Endothelial cell of umbilical vein (primary cell): ENCODE measurements at regions of chr15 and their contacts with region 1.

Region 1: DNA sequence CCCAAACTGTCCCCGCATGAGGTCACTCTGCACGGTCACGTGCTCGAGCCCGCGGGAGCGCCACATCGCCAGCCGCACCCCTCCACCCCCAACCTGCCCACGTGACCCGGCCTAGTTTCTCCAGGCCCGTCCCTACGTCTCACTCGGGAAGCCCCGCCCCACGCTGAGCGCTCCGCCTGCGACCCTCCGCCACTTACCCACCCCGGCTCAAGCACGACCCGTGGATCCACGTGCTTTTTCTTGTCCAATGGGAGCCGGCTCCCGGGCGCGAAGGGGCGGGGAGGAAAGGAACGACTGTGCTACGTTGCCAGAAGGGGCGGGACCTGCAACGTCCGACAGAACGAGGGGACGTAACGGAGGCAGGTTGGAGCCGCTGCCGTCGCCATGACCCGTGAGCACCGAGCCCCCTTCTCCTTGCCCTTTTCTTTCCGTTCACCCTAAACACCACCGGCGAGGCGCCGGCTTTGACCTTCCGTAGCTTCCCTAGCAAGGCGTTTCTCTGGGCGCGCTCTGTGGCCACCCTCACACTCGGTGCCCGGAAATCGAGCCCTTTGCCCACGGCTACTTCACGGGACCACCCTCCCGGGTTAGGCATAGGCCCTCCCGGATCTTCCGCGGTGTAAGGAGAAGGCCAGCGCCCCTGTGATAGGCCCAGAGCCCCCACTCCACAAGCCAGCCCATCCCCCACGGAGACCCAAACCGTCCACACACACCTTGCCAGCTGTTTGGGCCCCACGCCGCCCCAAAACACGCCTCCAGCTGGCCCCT is at the start of gene SERF2:
- DNase-seq: peak; percentile 100
- H3K4me3 ChIP-seq: peak within 1 kb of the TSS; percentile 73 to 82 (median 74)
- H3K27ac ChIP-seq: peak within 1 kb of the TSS; percentile 91
- H3K4me1 ChIP-seq: peaks cover 21% of the 10 kb centered on the region
- H3K27me3 ChIP-seq: no peaks in the 10 kb centered on the region
- CTCF ChIP-seq: no peak
- POLR2A ChIP-seq: peak; percentile 95
- total RNA-seq, gene SERF2: 897 and 970 TPM in 2 replicates

Region 2: DNA sequence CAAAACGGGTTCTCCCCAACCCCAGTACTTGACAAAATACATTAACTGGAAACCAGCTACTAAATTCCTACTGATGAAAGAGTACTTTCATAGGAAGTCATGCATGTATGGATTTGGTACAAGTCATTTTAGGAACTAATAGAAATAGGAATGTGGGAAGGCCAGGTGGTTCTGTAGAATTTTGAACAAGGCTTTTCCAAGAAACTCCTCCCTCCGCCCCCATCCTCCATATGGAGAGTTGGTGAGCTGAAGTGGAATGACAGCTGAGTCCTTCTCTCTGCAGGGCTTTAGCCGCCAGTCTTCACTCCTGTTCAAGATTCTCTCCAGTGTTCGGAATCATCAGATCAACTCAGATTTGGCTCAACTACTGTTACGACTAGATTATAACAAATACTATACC is 388.0 kb before region 1 on chr15:
- CTCF ChIA-PET with region 1: no interaction called
- POLR2A ChIA-PET with region 1: no interaction called
- dilution Hi-C with region 1: no loop called
- intact Hi-C with region 1: no loop called
- DNase-seq: no peak
- H3K4me3 ChIP-seq: no peak overlapping the region
- H3K27ac ChIP-seq: no peak overlapping the region
- H3K4me1 ChIP-seq: no peaks in the 10 kb centered on the region
- H3K27me3 ChIP-seq: no peaks in the 10 kb centered on the region
- CTCF ChIP-seq: no peak
- POLR2A ChIP-seq: no peak

Region 3: GRCh38 chr15:43776718-43777583 is 15.2 kb before region 1 on chr15 and contains the start of gene ELL3:
- CTCF ChIA-PET with region 1: interaction called, 24 read pairs
- POLR2A ChIA-PET with region 1: no interaction called
- dilution Hi-C with region 1: no loop called
- intact Hi-C with region 1: loop called (anchors 1 kb)
- DNase-seq: peak; percentile 87
- H3K4me3 ChIP-seq: peak within 1 kb of the TSS; percentile 56 to 76 (median 61)
- H3K27ac ChIP-seq: peak within 1 kb of the TSS; percentile 48
- H3K4me1 ChIP-seq: peaks cover 3% of the 10 kb centered on the region
- H3K27me3 ChIP-seq: no peaks in the 10 kb centered on the region
- CTCF ChIP-seq: peak; percentile 77 to 89
- POLR2A ChIP-seq: peak; percentile 52
- total RNA-seq, gene ELL3: 2.4 and 3.6 TPM in 2 replicates

Region 4: DNA sequence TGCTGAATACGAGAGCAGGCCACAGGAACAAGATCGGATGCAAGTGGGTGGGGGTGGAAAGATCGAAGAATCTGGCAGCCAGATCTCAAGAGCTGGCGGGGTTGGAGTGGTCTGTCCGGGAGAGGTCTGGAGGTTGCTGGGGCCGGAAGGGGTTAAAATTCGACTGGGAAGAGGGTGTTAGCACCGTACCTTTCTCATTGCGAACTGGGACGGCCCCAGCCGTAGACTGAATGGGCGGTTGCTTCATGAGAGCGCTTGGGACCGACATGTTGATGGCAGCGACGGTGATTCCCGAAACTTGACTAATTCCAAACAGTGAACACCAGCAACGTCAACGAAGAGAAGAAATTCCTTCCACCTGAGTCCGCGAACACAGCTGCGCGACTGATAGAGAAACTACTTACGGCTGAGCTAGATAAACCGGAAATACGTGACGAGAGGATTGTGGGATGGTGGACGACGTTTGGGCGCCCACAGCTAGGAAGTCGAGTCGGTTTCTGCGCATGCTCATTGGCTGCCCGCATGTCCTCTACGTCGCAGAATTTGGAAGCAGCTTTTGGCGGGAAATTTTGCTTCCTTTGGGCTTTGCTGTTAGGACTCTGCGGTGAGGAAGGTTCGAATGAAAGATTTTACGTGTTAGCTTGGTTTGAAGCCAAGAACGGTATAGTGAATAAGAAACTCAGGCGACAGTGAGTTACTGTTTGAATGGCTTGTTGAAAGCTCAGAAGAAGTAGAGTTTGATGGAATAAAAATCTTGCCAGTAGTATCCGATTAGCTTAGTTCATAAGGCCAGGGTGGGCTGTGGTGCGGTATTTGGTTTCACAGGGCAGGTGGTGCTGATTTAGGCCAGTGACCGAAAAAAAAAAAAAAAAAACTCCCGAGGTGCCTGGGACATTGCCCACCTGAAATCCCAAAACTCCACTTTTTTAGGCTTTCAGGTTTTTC is 32.4 kb after region 1 on chr15 and contains the start of gene MFAP1:
- CTCF ChIA-PET with region 1: interaction called, 3 read pairs
- POLR2A ChIA-PET with region 1: no interaction called
- dilution Hi-C with region 1: no loop called
- intact Hi-C with region 1: loop called (anchors 1 kb)
- DNase-seq: peak; percentile 97
- H3K4me3 ChIP-seq: peak within 1 kb of the TSS; percentile 43 to 91 (median 86)
- H3K27ac ChIP-seq: peak within 1 kb of the TSS; percentile 77
- H3K4me1 ChIP-seq: peaks cover 22% of the 10 kb centered on the region
- H3K27me3 ChIP-seq: no peaks in the 10 kb centered on the region
- CTCF ChIP-seq: no peak
- POLR2A ChIP-seq: peak; percentile 97
- total RNA-seq, gene MFAP1: 29.3 and 30.5 TPM in 2 replicates